ENCODE measurements at regions of chr5 and their contacts with region 1.

Region 1: DNA sequence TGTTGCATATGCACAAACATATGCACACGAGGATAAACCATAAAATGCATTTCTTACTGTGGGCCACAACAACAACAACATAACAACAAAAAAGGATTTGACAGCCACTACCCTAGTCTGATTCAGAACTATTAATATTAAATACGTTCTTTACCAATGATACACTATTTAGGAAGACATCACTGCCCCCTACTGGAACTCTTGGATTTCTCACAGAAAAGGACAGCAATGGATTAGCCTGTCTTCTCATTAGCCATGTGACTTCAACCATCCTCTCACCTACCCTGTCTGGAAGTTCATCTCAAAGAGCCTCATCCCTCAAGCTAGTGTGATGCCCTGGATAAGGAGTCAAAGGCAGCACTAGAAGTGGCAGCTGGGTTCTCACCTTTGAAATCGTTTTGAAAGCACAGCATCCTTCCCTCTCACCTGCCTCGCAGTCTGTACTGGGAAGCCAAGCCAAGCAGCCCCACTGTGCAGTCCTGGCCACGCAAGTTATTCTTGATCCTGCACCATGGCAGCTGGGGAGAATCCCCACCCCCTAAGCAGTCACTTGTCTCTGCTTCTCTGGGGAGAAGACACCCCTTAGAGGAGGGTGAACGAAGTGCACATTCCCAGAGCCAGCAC is 64.6 kb downstream of the SH3TC2 start:
- DNase-seq: peak in 1 of 4 donors; percentile 33
- ATAC-seq: peak; percentile 75
- H3K4me3 ChIP-seq: no peak overlapping the region
- H3K27ac ChIP-seq: no peak overlapping the region
- H3K4me1 ChIP-seq: no peaks in the 10 kb centered on the region
- H3K27me3 ChIP-seq: no peaks in the 10 kb centered on the region
- CTCF ChIP-seq: peak; percentile 69 to 77

Region 2: GRCh38 chr5:148740966-148741742 is 257.1 kb before region 1 on chr5:
- intact Hi-C with region 1: loop called in 1 of 2 experiments (anchors 10 kb)
- DNase-seq: peak in 2 of 4 donors; percentile 42 to 65
- ATAC-seq: peak; percentile 92
- H3K4me3 ChIP-seq: no peak overlapping the region
- H3K27ac ChIP-seq: no peak overlapping the region
- H3K4me1 ChIP-seq: peaks cover 5 to 14% of the 10 kb centered on the region in 2 donors
- H3K27me3 ChIP-seq: no peaks in the 10 kb centered on the region
- CTCF ChIP-seq: peak; percentile 57 to 74

Region 3: DNA sequence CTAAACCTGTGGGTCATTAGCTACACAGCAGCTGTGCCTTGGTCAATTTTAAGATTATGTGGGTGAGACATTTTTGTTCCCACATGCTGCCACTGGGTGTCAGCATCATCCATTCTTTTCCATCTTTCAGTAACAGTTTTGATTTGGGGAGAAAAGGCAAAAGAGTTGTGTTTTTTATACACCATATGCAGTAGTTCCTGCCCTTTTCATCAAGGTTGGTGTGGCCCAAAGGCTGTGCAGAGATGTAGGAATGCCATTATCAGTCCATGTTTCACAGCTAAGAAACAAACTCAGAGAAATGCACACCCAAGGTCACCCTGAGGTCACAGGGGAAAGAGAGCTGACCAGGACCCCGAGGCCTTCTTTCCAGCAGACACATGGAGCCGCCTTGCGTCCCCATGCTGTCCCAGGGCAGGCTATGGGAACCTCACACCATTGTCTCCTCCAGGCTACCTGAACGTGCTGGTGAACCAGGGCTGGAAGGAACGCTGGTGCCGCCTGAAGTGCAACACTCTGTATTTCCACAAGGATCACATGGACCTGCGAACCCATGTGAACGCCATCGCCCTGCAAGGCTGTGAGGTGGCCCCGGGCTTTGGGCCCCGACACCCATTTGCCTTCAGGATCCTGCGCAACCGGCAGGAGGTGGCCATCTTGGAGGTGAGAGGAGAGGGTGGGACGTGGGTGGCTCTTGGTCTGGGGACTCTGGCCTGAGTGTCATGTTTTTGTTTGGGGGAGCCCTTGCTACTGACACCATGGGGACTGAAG is 319.2 kb after region 1 on chr5:
- intact Hi-C with region 1: no loop called
- DNase-seq: peak in 2 of 4 donors; percentile 46 to 69
- ATAC-seq: peak; percentile 64
- H3K4me3 ChIP-seq: no peak overlapping the region
- H3K27ac ChIP-seq: no peak overlapping the region
- H3K4me1 ChIP-seq: peaks cover 6 to 13% of the 10 kb centered on the region in 2 donors
- H3K27me3 ChIP-seq: no peaks in the 10 kb centered on the region
- CTCF ChIP-seq: peak; percentile 46 to 73